Aorta (tissue), 5 donors: ENCODE measurements at regions of chr1 and their contacts with region 1.

Region 1: DNA sequence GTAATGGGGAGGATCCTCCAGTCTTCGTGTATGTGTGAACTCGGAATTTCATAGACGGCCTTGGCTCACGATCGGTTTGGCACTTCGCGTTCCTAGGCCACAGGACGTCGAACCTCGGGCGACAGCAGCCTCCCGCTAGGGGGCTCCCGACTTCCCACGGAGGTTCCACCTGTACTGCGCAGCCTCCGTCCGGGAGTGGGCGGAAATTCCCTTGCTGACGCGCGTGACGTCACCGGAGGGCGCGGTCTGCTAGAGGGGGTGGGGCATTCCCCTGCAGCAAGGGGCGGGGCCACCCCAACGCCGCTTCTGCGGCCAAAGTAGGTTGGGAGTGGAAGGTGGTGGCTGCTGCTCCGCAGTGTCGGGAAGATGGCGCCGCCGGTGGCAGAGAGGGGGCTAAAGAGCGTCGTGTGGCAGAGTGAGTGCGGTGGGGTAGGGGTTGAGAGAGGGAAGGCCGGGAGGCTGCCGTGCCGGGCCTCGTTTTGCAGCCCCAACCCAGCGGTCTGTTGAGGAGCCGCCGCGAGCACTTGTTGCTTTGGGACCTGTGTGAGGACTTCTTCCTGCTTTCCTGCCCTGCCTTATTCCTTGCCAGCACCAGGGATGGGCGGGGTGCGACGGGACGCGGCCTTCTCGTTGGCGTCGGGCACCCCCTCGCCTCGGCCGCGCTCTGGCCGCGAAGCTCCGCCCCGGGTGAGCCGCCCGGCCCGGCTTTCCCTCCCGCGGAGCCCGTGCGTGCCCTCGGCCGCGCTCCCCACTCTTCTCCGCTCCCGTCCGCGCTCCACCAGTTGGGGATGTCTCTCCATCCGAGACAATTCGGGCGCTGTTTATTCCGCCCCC is at the start of gene STXBP3:
- DNase-seq: peak; percentile 99 to 100
- ATAC-seq: peak; percentile 99
- H3K4me3 ChIP-seq: peak within 1 kb of the TSS; percentile 84 to 90
- H3K27ac ChIP-seq: peak within 1 kb of the TSS; percentile 98
- H3K4me1 ChIP-seq: no peaks in the 10 kb centered on the region
- H3K27me3 ChIP-seq: no peaks in the 10 kb centered on the region
- total RNA-seq, gene STXBP3: 56.5 to 67.0 TPM

Region 2: GRCh38 chr1:108691942-108692723 is 54.5 kb before region 1 on chr1 and contains the start of gene PRPF38B:
- intact Hi-C with region 1: loop called (anchors 2 kb)
- DNase-seq: peak; percentile 97 to 98
- ATAC-seq: peak; percentile 99
- H3K4me3 ChIP-seq: peak within 1 kb of the TSS; percentile 76 to 91
- H3K27ac ChIP-seq: peak within 1 kb of the TSS; percentile 36 to 98
- H3K4me1 ChIP-seq: no peaks in the 10 kb centered on the region
- H3K27me3 ChIP-seq: no peaks in the 10 kb centered on the region
- total RNA-seq, gene PRPF38B: 41.2 to 45.6 TPM

Region 3: DNA sequence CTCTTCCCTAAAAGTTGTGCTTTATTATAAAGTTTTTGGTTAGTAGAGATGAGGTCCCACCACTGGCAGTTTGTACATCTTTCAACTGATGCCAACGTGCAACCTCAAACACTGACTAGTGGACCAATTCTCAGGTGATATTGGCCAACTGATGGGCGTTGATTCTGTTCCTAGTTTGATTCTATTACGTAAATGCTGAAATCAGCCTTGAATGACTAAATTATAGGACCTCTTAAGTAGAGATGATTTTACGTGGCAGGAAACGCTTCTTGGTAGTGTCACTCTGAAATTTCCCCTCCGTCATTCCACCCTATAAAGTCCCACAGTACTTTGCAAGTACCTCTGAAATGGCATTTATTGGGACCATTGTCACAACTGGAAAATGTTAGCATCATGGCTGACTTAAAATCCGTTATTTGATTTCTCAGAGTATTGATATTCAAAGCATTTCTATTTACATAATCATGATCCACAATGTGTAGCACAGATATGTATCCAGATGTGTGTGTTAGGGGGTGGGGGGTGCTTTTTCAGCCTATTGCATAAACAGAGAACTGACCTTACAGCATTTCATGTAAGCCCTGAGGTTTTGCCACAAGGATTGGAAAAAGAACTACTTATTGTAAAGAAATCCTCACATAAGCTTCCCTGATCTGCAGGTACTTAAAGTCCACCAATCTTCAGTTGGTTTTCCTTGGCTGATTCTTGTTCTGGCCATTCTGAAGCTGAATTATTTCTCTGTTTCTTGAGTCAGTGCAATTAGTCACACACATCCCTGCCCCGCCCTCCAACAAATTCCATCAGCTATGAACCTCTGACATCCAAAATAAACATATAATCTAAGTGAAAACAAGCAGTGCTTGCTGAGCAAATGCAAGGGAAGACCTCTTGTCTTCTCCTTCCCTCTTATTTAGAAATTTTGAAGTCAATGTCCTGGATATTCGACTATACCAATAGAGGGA is 42.4 kb before region 1 on chr1:
- intact Hi-C with region 1: loop called in 1 of 2 experiments (anchors 2 kb)
- DNase-seq: no peak
- ATAC-seq: no peak
- H3K4me3 ChIP-seq: peak overlapping the region in 1 of 2 donors; percentile 22
- H3K27ac ChIP-seq: no peak overlapping the region
- H3K4me1 ChIP-seq: no peaks in the 10 kb centered on the region
- H3K27me3 ChIP-seq: no peaks in the 10 kb centered on the region

Region 4: DNA sequence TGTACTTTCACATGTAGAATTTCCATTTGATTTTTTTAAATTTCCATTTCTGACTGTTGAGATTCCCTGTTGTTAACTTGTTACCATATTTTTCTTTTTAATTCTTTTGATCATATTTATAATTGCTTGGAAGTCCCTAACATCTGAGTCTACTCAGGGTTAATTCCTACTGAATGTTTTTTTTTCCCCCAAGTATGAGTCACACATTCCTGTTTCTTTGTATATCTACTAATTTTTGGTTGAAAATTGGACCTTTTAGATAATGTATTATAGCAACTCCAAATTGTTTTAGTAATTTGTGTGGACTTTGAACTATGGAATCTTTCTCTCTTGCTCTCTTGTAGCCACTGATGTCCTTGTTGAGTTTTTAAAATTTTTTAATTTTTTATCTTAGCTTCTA is 54.5 kb after region 1 on chr1:
- intact Hi-C with region 1: no loop called
- DNase-seq: no peak
- ATAC-seq: no peak
- H3K4me3 ChIP-seq: no peak overlapping the region
- H3K27ac ChIP-seq: no peak overlapping the region
- H3K4me1 ChIP-seq: no peaks in the 10 kb centered on the region
- H3K27me3 ChIP-seq: no peaks in the 10 kb centered on the region

Region 5: GRCh38 chr1:108816049-108816893 is 69.7 kb after region 1 on chr1:
- intact Hi-C with region 1: loop called in 1 of 2 experiments (anchors 2 kb)
- DNase-seq: peak; percentile 84
- ATAC-seq: peak; percentile 92
- H3K4me3 ChIP-seq: peak overlapping the region in 1 of 2 donors; percentile 76
- H3K27ac ChIP-seq: peak overlapping the region; percentile 83 to 94
- H3K4me1 ChIP-seq: peaks cover 1 to 3% of the 10 kb centered on the region in 2 donors
- H3K27me3 ChIP-seq: no peaks in the 10 kb centered on the region